ENCODE measurements at regions of chr16 and their contacts with region 1.

Region 1: DNA sequence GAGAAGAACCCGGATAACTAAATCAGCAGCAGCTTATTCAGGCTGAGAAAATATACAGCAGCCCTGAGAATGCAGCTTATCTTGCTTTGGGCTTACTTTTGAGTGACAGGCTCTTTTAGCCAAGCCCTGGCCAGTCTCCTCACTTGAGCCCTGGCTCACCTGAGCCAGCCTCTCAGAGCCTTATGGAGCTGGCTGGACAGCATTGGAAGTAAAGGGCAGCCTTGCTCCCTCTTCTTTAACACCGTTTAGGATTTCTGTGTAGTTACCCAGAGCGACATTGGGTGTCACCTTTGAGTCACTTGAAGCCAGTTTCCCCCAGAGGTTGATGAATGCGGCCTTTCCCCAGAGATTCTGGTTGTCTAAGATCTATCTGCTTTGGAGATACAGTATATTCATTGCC is 7.7 kb upstream of the NPIPB2 start:
- DNase-seq: peak; percentile 81
- CTCF ChIP-seq: peak; percentile 81

Region 2: GRCh38 chr16:11964761-11965551 is 15.4 kb after region 1 on chr16 and contains the start of gene TNFRSF17:
- CTCF ChIA-PET with region 1: interaction called, 21 read pairs
- POLR2A ChIA-PET with region 1: no interaction called
- DNase-seq: peak; percentile 71
- CTCF ChIP-seq: no peak

Region 3: GRCh38 chr16:12062343-12063005 is 112.9 kb after region 1 on chr16:
- CTCF ChIA-PET with region 1: interaction called, 54 read pairs
- POLR2A ChIA-PET with region 1: no interaction called
- DNase-seq: no peak
- CTCF ChIP-seq: no peak

Measured in GM10248 (cell line).